HCT116 (cell line): ENCODE measurements at regions of chr3 and their contacts with region 1.

Region 1: GRCh38 chr3:49786241-49786958 is at the start of gene IP6K1:
- DNase-seq: peak; percentile 99
- ATAC-seq: peak; percentile 99
- H3K4me3 ChIP-seq: peak within 1 kb of the TSS; percentile 54 to 90
- H3K27ac ChIP-seq: peak within 1 kb of the TSS; percentile 73
- H3K4me1 ChIP-seq: peaks cover 7 to 18% of the 10 kb centered on the region in 2 experiments; a peak in 3 of 4 replicates
- H3K27me3 ChIP-seq: no peaks in the 10 kb centered on the region
- CTCF ChIP-seq: no peak
- POLR2A ChIP-seq: peak; percentile 94
- RAD21 ChIP-seq: no peak
- total RNA-seq, gene IP6K1: 30.6 TPM

Region 2: DNA sequence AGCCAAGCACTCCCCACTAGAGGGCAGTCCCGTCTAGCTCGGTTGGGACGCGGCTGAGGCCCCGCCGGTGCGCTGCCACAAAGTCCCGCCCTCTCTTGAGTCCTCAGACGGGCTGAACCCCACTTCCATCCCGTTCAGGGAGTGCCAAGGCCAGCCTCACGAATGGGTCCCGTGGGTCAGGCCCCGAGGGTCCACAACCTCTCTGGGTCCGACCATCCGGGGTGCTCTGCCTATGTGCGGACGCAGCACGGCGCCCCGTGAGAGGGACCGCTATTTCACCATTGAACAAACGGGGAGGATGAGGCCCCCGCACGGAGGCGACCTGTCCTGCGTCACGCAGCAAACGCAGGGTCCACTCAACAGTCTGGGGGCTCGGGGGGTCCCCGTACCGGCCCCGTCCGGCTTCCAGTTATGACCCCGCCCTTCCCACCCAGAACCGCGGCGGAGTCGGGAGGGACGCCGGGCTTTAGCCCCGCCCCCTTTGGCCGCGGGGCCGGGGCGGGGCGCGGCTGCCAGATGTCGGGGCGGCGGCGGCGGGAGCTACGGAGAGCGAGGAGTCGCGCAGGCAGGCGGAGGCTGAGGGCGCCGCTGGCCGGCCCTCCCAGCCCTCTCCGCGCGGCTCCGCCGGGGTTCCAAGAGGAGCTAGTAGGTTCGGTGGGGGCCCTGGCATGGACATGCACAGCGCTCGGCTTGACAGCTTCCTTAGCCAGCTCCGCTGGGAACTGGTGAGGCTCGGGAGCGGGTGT is 16.5 kb after region 1 on chr3 and contains the start of gene INKA1:
- CTCF ChIA-PET with region 1: interaction called, 15 read pairs
- POLR2A ChIA-PET with region 1: interaction called, 4 read pairs
- RAD21 ChIA-PET with region 1: no interaction called
- intact Hi-C with region 1: no loop called
- DNase-seq: peak; percentile 71
- ATAC-seq: peak; percentile 85
- H3K4me3 ChIP-seq: peak within 1 kb of the TSS; percentile 50 to 76
- H3K27ac ChIP-seq: peak within 1 kb of the TSS; percentile 65
- H3K4me1 ChIP-seq: peaks cover 5 to 33% of the 10 kb centered on the region in 2 experiments; a peak in 3 of 4 replicates
- H3K27me3 ChIP-seq: no peaks in the 10 kb centered on the region
- CTCF ChIP-seq: peak; percentile 84 to 94 (median 89); a peak in 5 of 6 replicates
- POLR2A ChIP-seq: peak; percentile 62
- RAD21 ChIP-seq: peak; percentile 92
- total RNA-seq, gene INKA1: 1.6 TPM

Region 3: DNA sequence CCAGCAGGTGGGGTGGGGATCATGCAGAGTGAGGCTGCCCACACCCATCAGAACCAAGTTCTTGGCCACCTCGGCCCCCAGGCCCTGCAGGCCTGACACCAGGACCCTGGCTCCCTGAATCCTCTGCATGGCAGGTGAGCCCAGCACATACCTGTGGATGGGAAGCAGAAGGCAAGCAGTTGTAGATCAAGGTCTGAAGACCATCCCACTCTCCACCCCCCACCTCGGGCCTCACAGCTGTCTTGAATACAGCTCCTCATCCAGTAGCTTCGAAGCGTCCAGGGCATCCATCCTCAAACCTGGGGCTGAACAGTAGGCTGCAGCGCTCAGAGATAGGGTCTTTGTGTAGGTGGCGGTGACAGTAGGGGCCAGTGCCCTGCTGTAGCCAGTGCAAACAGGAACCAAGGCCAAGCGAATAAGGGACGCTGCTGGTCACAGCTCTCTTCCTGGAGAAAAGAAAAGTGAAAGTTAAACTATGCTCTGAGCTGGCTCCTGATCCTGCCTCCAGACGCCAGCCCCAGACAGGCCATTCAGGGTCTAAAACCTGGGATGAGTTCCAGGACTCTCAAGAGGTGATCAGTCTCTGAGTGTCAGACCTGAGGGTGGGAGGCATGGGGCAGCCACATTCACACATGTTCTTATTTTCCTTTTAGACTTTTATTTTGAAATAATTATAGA is 27.2 kb after region 1 on chr3 and contains the start of gene UBA7:
- CTCF ChIA-PET with region 1: no interaction called
- POLR2A ChIA-PET with region 1: no interaction called
- RAD21 ChIA-PET with region 1: no interaction called
- intact Hi-C with region 1: loop called (anchors 1 kb)
- DNase-seq: no peak
- ATAC-seq: no peak
- H3K4me3 ChIP-seq: no peak within 1 kb of the TSS
- H3K27ac ChIP-seq: no peak within 1 kb of the TSS
- H3K4me1 ChIP-seq: no peaks in the 10 kb centered on the region
- H3K27me3 ChIP-seq: no peaks in the 10 kb centered on the region
- CTCF ChIP-seq: no peak
- POLR2A ChIP-seq: no peak
- RAD21 ChIP-seq: no peak
- total RNA-seq, gene UBA7: 2.6 TPM

Region 4: DNA sequence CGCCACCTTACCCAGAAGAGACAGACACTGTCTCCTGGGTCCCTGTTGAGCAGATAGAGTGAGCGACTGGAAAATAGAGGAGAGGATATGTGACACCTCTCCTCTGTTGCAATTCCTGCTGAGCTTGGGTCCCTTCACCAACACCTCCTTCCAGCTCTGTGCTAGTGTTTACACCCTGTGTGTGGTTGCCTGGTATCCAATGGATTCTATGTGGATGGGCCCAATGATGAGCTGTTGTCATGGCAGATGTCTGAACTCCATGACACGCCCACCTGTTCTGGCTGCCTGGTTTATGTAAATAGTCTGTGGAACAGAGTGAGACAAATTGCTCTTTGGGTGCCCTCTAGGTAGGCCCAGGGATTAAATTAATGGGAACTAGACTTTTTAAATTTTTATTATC is 326.1 kb after region 1 on chr3:
- CTCF ChIA-PET with region 1: no interaction called
- POLR2A ChIA-PET with region 1: no interaction called
- RAD21 ChIA-PET with region 1: no interaction called
- intact Hi-C with region 1: no loop called
- DNase-seq: no peak
- ATAC-seq: peak; percentile 30; the same call in 1 of the 2 replicates
- H3K4me3 ChIP-seq: no peak overlapping the region
- H3K27ac ChIP-seq: no peak overlapping the region
- H3K4me1 ChIP-seq: no peaks in the 10 kb centered on the region
- H3K27me3 ChIP-seq: no peaks in the 10 kb centered on the region
- CTCF ChIP-seq: no peak
- POLR2A ChIP-seq: no peak
- RAD21 ChIP-seq: no peak